AG04450 (cell line): ENCODE measurements at regions of chrX and their contacts with region 1.

Region 1: DNA sequence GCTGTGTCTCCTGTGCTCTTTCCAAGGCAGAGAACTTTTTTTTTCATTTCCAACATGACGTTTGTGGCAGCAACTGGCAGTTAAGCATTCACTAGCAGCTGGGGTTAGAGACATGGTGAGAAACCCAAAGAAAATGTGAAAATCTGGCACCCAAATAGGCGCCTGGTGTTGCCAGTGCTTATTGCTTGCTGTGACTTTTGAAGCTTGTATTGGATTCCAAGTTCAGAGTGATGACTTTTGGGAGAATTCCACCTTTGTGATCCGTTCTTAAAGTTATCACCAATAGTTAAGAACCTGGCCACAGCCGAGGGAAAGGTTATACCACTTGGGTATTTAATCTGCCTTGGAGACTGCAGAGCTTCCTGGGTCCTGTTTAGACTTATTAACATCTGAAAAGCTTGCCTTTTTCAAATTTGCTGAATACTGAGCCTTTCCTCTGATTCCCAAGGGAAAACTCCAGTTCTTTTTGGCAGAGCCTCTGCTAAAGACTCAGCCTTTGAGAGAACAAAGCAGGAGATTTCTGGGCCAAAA is 101.0 kb downstream of the OPHN1 start:
- DNase-seq: no peak
- H3K4me3 ChIP-seq: no peak overlapping the region
- H3K27ac ChIP-seq: no peak overlapping the region
- H3K27me3 ChIP-seq: no peaks in the 10 kb centered on the region
- CTCF ChIP-seq: no peak

Region 2: GRCh38 chrX:68354869-68355852 is 22.9 kb after region 1 on chrX:
- CTCF ChIA-PET with region 1: no interaction called
- POLR2A ChIA-PET with region 1: interaction called, 12 read pairs
- DNase-seq: no peak
- H3K4me3 ChIP-seq: no peak overlapping the region
- H3K27ac ChIP-seq: no peak overlapping the region
- H3K27me3 ChIP-seq: no peaks in the 10 kb centered on the region
- CTCF ChIP-seq: no peak